ENCODE measurements at regions of chr6 and their contacts with region 1.

Region 1: DNA sequence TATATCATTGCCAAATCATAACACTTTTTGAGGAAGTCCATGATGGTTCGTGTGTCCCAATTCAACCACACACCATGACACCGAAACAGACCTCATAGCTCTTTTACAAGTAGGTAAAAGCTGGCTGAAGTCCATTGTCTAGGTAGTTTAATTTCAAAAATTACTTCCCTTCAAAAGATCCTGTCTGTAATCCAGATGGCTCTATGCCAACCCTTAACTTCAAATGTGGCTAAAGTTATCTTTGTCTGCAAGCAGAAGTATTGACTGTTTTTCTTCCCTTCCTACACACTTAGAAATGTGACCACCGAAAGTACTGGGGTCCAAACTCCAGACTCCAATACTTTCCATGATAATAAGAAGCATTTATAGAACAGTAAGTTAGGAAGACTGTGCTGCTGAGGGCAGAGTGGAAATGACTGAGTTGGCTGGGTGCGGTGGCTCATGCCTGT is 8.3 kb upstream of the TIAM2 start:
- DNase-seq: no peak
- H3K4me3 ChIP-seq: no peak overlapping the region
- H3K4me3 Mint-ChIP-seq: no peak overlapping the region
- H3K27ac Mint-ChIP-seq: no peak overlapping the region
- H3K4me1 ChIP-seq: no peaks in the 10 kb centered on the region
- H3K4me1 Mint-ChIP-seq: no peaks in the 10 kb centered on the region
- H3K27me3 ChIP-seq: no peaks in the 10 kb centered on the region
- H3K27me3 Mint-ChIP-seq: no peaks in the 10 kb centered on the region
- CTCF ChIP-seq: no peak

Region 2: GRCh38 chr6:155154158-155154830 is 167.5 kb after region 1 on chr6:
- CTCF ChIA-PET with region 1: interaction called, 3 read pairs
- POLR2A ChIA-PET with region 1: interaction called, 12 read pairs
- intact Hi-C with region 1: no loop called
- DNase-seq: no peak
- H3K4me3 ChIP-seq: no peak overlapping the region
- H3K4me3 Mint-ChIP-seq: no peak overlapping the region
- H3K27ac Mint-ChIP-seq: no peak overlapping the region
- H3K4me1 ChIP-seq: peaks cover 18% of the 10 kb centered on the region
- H3K4me1 Mint-ChIP-seq: peaks cover 22% of the 10 kb centered on the region
- H3K27me3 ChIP-seq: no peaks in the 10 kb centered on the region
- H3K27me3 Mint-ChIP-seq: no peaks in the 10 kb centered on the region
- CTCF ChIP-seq: no peak

Measured in Caco-2 (cell line).